Activated T-helper 1 cell treated with anti-CD3 and anti-CD28 coated beads, Interleukin-12 subunit alpha, Interleukin-12 subunit beta, Interleukin-2, Interleukin-4 antibody, amounts not matched to agents 30 ng/mL and 10 ng/mL and 1 ng/mL, durations not matched to agents 14 hours and 24 hours and 36 hours (primary cell): ENCODE measurements at regions of chr1 and their contacts with region 1.

Region 1: DNA sequence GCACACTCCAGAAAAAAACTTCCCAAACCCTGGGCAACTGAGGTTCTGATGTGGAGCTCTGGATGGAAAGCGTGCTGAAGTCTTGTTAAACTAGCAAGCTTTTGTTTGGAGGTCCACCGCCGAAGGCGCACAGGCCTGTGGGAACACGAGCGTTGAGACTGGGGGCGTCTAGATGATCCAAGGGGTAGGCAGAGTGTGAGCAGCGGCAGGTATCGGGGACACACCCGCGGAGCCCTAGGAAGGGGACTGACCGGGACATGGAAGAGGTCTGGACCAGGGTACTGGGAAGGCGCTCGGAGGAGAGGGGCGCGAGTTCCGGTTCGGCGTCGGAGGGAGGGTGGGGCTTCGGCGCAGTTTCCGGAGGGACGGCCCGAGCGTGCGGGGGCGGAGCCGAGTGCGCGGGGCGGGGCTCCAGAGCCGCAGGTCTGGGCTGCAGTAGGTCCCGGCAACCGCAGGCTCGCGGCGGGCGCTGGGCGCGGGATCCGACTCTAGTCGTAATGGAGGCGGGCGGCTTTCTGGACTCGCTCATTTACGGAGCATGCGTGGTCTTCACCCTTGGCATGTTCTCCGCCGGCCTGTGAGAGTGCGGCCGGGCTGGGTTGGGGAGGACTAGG is at the start of gene SLC50A1:
- DNase-seq: peak; percentile 91
- H3K4me3 Mint-ChIP-seq: peak within 1 kb of the TSS; percentile 94
- H3K27ac Mint-ChIP-seq: peak within 1 kb of the TSS; percentile 99
- H3K4me1 Mint-ChIP-seq: peaks cover 42% of the 10 kb centered on the region
- H3K27me3 Mint-ChIP-seq: peaks cover 5% of the 10 kb centered on the region
- total RNA-seq, gene SLC50A1: 45.7 and 47.7 TPM in 2 replicates

Region 2: DNA sequence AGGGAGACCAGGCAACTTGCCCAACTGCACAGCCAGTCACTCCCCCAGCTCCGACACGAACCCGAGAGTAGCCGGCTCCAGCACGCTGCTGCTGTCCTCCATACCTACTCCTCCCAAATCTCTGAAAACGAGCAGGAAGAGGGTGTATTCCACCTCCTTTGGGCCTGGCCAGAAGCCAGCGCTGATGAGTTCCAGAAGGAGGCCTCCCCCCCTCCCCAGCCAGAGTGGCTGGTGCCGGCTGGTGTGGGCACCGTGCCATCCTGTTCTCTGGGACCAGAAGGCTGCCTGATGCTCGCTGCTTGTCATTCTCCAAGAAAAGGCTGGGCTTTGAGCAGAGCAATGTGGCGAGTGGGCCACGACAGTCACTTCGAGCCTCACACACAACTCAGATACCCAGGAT is 287.6 kb before region 1 on chr1:
- intact Hi-C with region 1: no loop called
- DNase-seq: no peak
- H3K4me3 Mint-ChIP-seq: no peak overlapping the region
- H3K27ac Mint-ChIP-seq: no peak overlapping the region
- H3K4me1 Mint-ChIP-seq: peaks cover 18% of the 10 kb centered on the region
- H3K27me3 Mint-ChIP-seq: peaks cover 10% of the 10 kb centered on the region

Region 3: DNA sequence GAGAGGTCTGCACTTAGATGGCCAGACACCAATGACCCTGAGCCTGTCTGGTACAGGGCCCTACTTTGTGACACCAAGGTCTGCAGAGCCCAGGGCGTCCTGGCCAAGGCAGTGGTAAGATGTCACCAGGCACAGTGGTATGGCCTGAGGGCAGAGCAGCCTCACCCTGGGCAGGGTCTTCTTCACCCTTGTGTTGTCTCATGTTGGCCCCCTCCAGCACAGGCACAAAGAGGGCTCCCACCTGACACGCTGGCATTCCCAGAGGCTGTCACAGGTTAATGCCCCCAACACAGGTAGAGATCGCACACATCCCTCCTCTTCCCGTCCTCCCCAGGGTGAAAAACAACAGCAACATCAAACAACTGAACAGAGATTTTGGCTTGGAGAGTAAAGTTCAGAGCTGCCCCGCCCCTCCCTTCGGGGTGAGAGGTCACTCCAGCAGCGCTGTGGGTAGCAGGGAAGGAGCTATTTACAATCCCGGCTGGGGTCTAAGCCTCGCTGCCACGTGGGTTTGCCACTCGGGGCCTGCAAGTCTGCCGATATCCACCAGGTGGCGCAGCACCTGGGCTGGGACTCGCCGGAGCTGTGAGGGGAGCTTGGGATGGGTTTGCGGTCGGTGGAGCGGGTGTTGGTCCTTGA is 44.3 kb before region 1 on chr1:
- intact Hi-C with region 1: loop called (anchors 1 kb)
- DNase-seq: peak; percentile 69
- H3K4me3 Mint-ChIP-seq: no peak overlapping the region
- H3K27ac Mint-ChIP-seq: no peak overlapping the region
- H3K4me1 Mint-ChIP-seq: peaks cover 7% of the 10 kb centered on the region
- H3K27me3 Mint-ChIP-seq: peaks cover 19% of the 10 kb centered on the region

Region 4: DNA sequence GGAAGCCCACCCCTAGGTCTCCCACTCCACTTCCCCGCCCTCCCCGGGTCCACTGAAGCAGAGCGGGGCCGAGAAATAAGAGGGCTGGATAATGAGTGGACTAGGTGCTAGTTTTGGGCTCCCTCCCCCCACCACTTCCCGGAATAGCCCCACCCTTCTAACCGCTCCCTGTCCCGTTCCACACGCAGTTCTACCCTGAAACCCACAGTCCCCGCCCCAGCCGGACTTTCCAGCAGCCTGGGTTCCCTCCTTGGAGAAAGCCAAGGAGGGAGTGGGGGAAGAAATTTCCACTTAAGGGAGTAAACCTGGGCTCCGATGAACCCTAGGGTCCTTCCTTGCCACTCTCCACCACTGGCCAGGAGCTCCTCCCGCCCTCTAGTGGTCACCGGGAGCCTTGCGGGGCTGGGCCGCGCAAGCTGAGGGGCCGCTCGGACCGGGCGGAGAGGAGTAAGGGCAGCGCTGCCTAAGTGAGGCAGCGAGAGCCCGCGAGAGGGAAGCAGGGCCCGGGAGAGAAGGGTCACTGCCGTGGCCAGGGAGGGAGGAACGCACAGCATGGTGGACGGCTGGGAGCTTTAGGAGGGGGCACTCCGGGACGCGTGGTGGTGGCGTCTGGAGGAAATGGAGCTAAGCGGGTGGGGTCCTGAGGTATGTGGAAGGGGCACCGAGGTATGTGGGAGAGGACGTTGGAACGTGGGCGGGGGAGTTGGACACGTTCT is 57.9 kb after region 1 on chr1:
- intact Hi-C with region 1: loop called (anchors 2 kb)
- DNase-seq: peak; percentile 72
- H3K4me3 Mint-ChIP-seq: peak overlapping the region; percentile 88
- H3K27ac Mint-ChIP-seq: peak overlapping the region; percentile 97
- H3K4me1 Mint-ChIP-seq: peaks cover 39% of the 10 kb centered on the region
- H3K27me3 Mint-ChIP-seq: no peaks in the 10 kb centered on the region

Region 5: DNA sequence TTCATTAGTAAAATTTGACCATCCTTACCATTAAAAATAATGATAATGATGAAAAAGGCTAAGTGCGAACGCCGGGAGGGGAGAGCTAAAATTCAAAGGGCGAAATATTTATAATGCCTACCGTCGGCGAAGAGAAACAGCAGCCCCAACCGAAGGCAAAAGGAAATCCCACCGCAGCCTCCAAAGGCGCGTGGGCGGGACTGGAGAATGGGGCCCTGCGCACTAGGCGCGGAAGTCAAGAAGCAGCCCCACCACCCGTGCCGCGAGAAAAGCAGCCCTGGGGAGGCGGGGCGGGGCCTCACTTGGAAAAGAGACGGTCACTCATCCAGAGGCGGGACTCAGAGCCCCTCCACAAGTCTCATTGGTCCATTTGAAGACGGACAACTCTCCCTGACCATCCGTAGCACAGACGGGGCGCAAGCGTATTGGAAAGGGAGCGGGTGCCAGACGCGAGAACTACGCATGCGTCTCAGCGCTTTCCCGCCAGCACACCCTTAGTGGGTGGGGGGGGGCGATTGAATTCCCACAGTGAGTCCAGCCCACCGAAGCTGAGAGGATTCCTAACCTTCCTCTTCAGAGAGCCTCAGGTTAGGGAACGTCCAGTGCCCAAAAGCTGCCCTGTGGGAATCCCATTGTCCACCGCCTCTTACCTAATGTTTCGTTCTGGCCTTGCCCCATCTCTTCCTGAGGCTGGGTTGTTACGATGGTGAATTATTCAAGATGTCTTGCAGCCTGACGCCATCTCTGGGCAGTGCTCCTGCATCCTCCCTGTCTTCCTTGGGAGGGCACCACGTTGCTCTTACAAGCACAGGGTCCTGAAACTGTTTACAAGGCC is 92.0 kb after region 1 on chr1:
- intact Hi-C with region 1: loop called (anchors 2 kb)
- DNase-seq: peak; percentile 98
- H3K4me3 Mint-ChIP-seq: peak overlapping the region; percentile 95
- H3K27ac Mint-ChIP-seq: peak overlapping the region; percentile 92
- H3K4me1 Mint-ChIP-seq: peaks cover 15% of the 10 kb centered on the region
- H3K27me3 Mint-ChIP-seq: no peaks in the 10 kb centered on the region